Cardiac septum (tissue), 1 donor: ENCODE measurements at regions of chr19 and their contacts with region 1.

Region 1: DNA sequence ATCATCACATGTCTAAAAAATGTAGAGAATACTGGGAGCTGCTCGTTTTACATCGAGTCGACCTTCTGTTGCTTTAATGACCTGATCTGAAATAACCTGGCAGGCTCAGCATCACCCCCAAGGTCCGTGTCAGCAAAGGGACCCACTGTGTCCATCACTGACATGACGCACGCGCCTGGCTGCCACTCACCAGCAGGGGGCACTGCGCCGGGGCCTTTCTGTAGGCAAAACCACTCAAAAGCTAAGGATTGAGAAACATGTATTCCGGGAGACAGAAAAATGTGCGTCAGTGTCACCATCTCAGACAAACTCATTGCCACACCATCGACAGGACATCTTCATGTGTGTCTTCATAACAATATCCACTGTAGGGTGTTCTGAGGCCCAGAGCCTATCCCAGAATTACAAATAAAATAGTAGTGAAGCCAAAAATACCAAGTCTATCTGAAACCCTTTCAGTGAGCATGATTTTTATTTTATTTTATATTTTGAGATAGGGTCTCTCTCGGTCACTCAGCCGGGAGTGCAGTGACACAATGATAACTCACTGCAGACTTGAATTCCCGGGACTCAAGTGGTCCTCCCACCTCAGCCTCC is 130.3 kb upstream of the LSM14A start:
- DNase-seq: no peak

Region 2: GRCh38 chr19:34145741-34146202 is 103.7 kb after region 1 on chr19:
- intact Hi-C with region 1: loop called (anchors 2 kb)
- DNase-seq: no peak